K562 (cell line): ENCODE measurements at regions of chr12 and their contacts with region 1.

Region 1: GRCh38 chr12:25705261-25705660 is 152.2 kb upstream of the LMNTD1 start:
- DNase-seq: no peak
- ATAC-seq: no peak
- H3K4me3 ChIP-seq: no peak overlapping the region
- H3K27ac ChIP-seq: no peak overlapping the region
- H3K4me1 ChIP-seq: no peaks in the 10 kb centered on the region; a peak in 1 of 5 replicates
- H3K27me3 ChIP-seq: no peaks in the 10 kb centered on the region
- CTCF ChIP-seq: no peak
- EP300 ChIP-seq: no peak
- POLR2A ChIP-seq: no peak
- RAD21 ChIP-seq: no peak

Region 2: DNA sequence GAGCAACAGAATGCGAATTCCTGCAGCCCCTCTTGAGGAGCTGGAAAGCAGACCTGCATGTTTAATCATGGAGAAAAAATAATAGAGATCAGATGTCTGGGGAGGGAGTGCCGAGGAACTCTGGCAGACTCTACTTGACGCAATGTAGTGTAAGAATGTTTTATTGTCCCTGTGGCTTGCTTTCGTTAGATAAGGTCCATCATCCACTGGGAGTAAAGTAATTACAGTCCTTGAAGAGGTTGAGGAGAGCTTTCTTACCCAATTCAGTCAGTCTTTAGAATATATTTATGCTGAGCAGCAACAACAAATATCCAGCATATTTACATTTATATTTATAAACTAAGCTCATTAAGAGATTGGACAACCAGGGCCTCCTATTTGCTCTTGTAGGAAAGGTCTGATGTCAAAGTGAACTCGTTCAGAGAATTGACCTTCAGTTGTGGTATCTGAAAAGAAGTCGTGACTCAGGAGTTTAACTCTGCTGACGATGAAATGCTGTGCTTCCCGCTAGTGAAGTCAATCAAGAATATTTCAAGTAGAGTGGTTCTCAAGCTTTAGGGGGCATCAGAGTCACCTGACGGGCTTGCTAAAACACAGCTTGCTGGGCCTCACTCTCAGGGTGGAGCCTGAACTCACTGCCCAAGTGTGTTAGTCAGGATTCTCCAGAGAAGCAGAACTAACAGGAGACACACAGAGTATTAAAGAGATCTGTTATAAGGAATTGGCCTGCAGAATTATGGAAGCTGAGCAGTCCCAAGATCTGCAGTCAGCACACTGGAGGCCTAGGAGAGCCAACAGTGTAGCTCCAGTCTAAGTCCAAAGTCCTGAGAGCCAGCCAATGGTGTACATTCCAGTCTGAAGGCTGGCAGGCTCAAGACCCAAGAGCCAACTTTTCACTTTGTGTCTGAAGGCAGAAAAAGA is 12.9 kb before region 1 on chr12:
- CTCF ChIA-PET with region 1: no interaction called
- POLR2A ChIA-PET with region 1: interaction called, 13 read pairs
- in situ Hi-C with region 1: no loop called
- intact Hi-C with region 1: no loop called
- DNase-seq: peak in 2 of 4 experiments; percentile 22 to 36
- ATAC-seq: peak; percentile 88
- H3K4me3 ChIP-seq: no peak overlapping the region
- H3K27ac ChIP-seq: peak overlapping the region; percentile 83; the same call in 2 of the 3 replicates
- H3K4me1 ChIP-seq: peaks cover 0 to 21% of the 10 kb centered on the region in 2 experiments; a peak in 4 of 5 replicates
- H3K27me3 ChIP-seq: no peaks in the 10 kb centered on the region
- CTCF ChIP-seq: peak in 1 of 3 experiments; percentile 15; a peak in 1 of 6 replicates
- EP300 ChIP-seq: peak; percentile 94
- POLR2A ChIP-seq: no peak
- RAD21 ChIP-seq: peak; percentile 51 to 55; a peak in 3 of 4 replicates